HCT116 (cell line): ENCODE measurements at regions of chr10 and their contacts with region 1.

Region 1: DNA sequence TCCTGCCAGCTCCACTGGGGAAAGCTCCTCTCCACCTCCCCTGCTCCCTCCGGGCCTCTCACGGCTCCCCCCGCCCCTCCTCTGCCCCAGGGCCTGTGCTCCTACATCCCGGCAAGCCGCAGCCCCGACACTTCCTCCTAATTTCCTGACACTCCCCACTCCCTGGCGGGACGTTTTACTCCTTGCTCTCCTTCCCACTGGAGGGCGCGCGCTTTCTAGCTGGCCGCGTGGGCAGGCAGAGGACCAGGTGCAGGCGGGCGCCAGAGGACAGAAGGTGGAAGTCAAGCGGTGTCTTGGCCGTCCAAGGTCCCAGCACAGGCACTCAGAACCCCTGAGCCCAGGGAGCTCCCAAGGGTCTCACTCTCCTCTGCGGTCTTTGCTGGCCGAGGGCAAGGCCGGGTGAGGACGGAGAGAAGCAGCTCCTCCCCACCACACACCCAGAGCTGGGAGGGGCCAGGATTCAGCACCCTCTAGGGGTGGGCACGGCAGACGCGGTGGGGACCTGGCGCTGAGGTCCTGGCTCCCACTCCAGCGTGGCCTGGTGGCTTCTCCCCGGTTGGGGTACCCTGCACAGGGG is 19.1 kb downstream of the ADAM8 start:
- DNase-seq: no peak
- ATAC-seq: peak; percentile 69
- H3K4me3 ChIP-seq: peak overlapping the region; percentile 33 to 54
- H3K27ac ChIP-seq: peak overlapping the region; percentile 92
- H3K4me1 ChIP-seq: peaks cover 40 to 50% of the 10 kb centered on the region in 2 experiments
- H3K27me3 ChIP-seq: no peaks in the 10 kb centered on the region
- CTCF ChIP-seq: peak; percentile 33 to 59 (median 34); a peak in 3 of 6 replicates
- POLR2A ChIP-seq: peak; percentile 9
- RAD21 ChIP-seq: peak; percentile 58

Region 2: DNA sequence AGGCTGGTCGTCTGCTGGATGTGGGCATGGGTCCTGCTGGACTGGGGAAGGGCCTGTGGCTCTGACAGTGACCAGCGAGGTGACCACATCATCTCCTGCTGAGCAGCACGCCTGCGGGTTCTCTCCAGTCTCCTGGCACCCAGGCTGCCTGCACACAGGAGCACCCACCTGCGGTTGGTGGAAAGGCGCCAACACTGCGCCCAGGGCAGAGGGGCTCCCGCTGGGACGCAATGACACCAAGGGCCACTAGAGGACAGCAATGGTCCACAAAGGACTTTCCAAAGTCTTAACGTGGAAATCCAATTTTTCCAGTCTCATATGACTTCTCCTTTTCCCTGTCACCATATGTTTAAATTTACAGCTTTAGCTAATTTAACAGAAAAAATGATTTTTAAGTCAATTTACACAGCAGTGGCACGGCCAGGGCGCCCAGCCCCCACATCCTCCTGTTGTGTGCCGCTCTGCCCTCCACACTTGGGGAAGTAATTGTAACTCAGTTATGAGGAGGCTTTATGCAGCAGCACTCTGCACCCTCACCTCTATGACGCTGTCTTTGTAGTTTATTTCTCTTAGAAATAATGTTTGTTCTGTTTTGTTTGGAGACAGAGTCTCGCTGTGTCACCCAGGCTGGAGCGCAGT is 353.3 kb before region 1 on chr10:
- CTCF ChIA-PET with region 1: no interaction called
- POLR2A ChIA-PET with region 1: no interaction called
- RAD21 ChIA-PET with region 1: no interaction called
- intact Hi-C with region 1: loop called (anchors 10 kb)
- DNase-seq: peak; percentile 29
- ATAC-seq: peak; percentile 85
- H3K4me3 ChIP-seq: no peak overlapping the region
- H3K27ac ChIP-seq: no peak overlapping the region
- H3K4me1 ChIP-seq: peaks cover 11 to 18% of the 10 kb centered on the region in 2 experiments; a peak in 3 of 4 replicates
- H3K27me3 ChIP-seq: no peaks in the 10 kb centered on the region
- CTCF ChIP-seq: peak; percentile 69 to 75 (median 71)
- POLR2A ChIP-seq: no peak
- RAD21 ChIP-seq: peak; percentile 80

Region 3: DNA sequence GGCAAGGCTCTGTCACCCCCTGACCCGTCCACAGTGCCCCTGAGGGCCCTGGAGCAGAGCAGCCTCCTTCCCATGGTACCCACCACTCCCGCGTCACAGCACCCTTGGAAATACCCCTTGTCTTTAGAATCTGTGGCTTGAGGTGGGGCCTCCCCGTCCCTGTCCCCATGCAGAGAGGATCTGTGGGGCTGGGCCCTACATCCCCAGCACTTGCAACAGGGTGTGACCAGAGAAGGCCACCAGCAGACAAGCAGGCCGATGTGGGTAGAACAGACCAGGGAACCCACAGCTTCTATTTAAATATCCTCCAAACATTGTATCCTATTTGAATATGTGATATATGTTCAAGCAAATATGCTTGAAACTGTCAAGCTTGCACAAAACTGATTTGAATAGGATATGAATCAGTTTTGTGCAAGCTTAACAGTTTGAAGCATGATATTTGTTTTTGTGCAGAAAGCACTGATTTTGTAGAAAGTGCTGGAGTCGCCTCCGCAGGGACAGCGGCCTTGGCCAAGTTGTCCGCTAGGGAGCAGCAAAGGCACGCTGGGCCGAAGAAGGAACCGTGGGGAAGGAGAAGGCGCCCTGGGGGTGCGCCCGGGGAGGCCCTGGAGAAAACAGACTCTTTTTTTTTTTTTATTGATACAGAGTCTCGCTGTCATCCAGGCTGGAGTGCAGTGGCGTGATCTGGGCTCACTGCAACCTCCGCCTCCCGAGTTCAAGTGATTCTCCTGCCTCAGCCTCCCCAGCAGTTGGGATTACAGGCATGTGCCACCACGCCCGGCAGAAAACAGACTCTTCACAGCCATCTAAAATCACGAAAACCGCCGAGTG is 317.4 kb before region 1 on chr10:
- CTCF ChIA-PET with region 1: no interaction called
- POLR2A ChIA-PET with region 1: no interaction called
- RAD21 ChIA-PET with region 1: interaction called in 1 of 2 experiments, 3 read pairs
- intact Hi-C with region 1: loop called (anchors 5 kb)
- DNase-seq: no peak
- ATAC-seq: 0 out of 2 replicates have a peak, but pooled peaks have one; percentile 47
- H3K4me3 ChIP-seq: no peak overlapping the region
- H3K27ac ChIP-seq: no peak overlapping the region
- H3K4me1 ChIP-seq: peaks cover 0 to 7% of the 10 kb centered on the region in 2 experiments; a peak in 1 of 4 replicates
- H3K27me3 ChIP-seq: no peaks in the 10 kb centered on the region
- CTCF ChIP-seq: peak; percentile 13 to 57 (median 38); a peak in 4 of 6 replicates
- POLR2A ChIP-seq: no peak
- RAD21 ChIP-seq: peak; percentile 60

Region 4: DNA sequence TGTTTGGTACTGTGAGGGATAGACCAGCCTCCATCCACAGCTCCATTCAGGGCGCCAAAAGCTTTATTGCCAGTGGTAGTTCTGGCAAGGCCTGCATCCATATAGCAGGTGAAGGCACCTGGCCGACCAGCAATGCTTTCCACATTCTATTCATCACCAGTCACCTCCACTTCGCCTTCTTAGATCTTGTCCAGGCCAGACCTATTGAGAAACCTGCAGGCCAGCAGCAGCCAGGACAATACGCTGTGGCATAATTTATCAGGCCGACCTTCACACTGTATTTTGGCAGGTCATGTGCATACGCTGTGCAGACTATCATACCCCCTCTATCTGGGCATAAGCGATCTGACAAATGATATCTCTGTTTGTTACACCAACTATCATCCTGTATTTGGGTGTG is 112.8 kb before region 1 on chr10:
- CTCF ChIA-PET with region 1: interaction called, 5 read pairs
- POLR2A ChIA-PET with region 1: no interaction called
- RAD21 ChIA-PET with region 1: no interaction called
- intact Hi-C with region 1: loop called (anchors 2 kb)
- DNase-seq: no peak
- ATAC-seq: no peak
- H3K4me3 ChIP-seq: no peak overlapping the region
- H3K27ac ChIP-seq: no peak overlapping the region; the same call in 1 of the 2 replicates
- H3K4me1 ChIP-seq: peaks cover 13 to 27% of the 10 kb centered on the region in 2 experiments
- H3K27me3 ChIP-seq: no peaks in the 10 kb centered on the region
- CTCF ChIP-seq: no peak
- POLR2A ChIP-seq: no peak
- RAD21 ChIP-seq: no peak

Region 5: DNA sequence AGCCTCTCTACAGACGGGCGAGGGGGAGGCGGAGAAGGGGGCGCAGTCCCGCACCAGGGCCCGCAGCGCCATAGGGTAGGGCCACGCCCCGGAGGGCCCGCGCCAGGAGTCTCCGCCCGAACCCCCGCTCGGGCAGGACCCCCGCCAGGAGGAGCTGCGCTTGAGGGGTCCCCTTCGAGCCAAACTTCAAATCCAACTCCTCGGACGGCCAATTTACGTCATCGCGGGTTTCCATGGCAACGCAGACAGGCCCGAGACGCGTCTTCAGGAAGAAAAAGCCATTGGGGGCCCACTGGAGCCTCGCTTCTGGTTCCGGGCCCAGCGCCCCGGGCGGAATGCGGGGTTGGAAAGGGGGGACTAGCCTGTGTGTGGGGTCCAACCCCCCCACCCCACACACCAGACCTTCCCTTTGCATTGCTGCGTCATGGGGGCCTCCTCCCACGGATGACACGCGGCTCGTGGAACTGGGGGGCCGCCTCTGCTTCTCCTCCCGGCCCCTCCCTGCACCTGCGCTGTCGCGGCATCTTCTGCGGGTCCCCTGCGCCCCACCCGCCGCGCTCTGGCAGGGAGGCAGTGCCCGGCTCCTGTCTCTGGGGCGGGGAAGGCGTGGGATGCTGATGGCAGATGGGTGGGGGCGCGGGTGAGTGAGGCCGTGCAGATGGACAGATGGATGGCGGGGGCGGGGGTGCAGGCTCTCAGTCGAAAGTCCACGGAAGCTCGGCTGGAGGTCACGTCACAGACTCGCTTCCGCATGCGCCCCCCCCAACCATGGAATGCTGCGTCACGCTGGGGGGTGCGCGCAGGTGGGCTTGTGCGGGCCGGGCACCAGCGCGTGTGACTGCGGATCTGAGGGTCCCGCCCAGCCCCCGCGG is 77.9 kb after region 1 on chr10:
- CTCF ChIA-PET with region 1: no interaction called
- POLR2A ChIA-PET with region 1: no interaction called
- RAD21 ChIA-PET with region 1: no interaction called
- intact Hi-C with region 1: no loop called
- DNase-seq: no peak
- ATAC-seq: no peak
- H3K4me3 ChIP-seq: no peak overlapping the region
- H3K27ac ChIP-seq: no peak overlapping the region
- H3K4me1 ChIP-seq: no peaks in the 10 kb centered on the region
- H3K27me3 ChIP-seq: no peaks in the 10 kb centered on the region
- CTCF ChIP-seq: no peak
- POLR2A ChIP-seq: no peak
- RAD21 ChIP-seq: no peak